ENCODE measurements at regions of chr20 and their contacts with region 1.

Region 1: DNA sequence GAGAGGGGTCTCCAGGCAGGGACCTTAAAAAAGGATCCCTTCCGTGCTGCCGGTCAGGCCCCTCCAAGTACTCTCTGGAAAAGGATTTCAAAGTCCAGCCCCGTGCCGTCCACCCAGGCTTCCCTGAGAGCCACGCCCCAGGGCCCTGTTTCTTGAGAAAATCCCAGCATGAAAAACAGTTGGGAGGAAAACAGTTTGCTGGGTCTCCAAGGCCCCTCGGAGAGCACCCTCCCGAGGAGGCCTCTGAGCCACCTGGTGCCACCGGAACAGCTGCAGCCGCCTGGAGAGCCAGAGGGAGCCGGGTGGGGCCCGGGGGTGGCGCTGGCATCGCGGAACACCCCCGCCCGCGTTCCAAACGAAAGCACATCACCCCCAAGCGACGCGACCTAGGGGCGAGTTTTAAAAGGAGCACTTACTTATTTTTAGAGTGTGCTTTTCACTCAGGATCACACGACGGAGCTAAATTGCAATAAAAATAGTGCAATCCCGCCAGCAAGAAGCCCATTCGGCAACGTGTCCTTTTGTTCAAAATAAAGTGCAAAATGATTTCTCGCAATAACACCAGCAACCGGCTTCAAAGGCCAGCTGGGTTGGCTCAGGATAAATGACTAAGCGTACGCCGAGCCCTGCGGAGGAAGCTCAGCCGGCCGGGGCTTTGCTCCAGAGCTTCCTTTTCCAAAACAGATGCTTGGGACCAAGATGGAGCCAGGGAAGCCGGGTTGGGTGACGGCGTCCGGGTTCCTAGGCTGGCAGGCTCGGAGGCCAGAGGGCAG is 64.2 kb downstream of the YTHDF1 start:
- DNase-seq: no peak
- H3K4me3 ChIP-seq: no peak overlapping the region
- H3K27ac ChIP-seq: no peak overlapping the region
- H3K4me1 ChIP-seq: no peaks in the 10 kb centered on the region
- H3K27me3 ChIP-seq: peaks cover 0 to 2% (median under 1%) of the 10 kb centered on the region in 4 experiments; a peak in 1 of 7 replicates
- CTCF ChIP-seq: no peak
- EP300 ChIP-seq: no peak
- POLR2A ChIP-seq: no peak
- RAD21 ChIP-seq: no peak

Region 2: GRCh38 chr20:63167376-63168173 is 15.8 kb after region 1 on chr20:
- CTCF ChIA-PET with region 1: interaction called, 5 read pairs
- POLR2A ChIA-PET with region 1: interaction called, 11 read pairs
- DNase-seq: no peak
- H3K4me3 ChIP-seq: peak overlapping the region in 3 of 4 experiments; percentile 19 to 47 (median 29); a peak in 4 of 8 replicates
- H3K27ac ChIP-seq: no peak overlapping the region
- H3K4me1 ChIP-seq: peaks cover 0 to 13% (median 7%) of the 10 kb centered on the region in 4 experiments; a peak in 5 of 7 replicates
- H3K27me3 ChIP-seq: peaks cover 0 to 6% (median 0%) of the 10 kb centered on the region in 4 experiments; a peak in 2 of 7 replicates
- CTCF ChIP-seq: no peak
- EP300 ChIP-seq: no peak
- POLR2A ChIP-seq: no peak
- RAD21 ChIP-seq: no peak; a peak in 1 of 4 replicates